Activated CD4-positive, alpha-beta memory T cell treated with anti-CD3 and anti-CD28 coated beads for 36 hours (primary cell): ENCODE measurements at regions of chr5 and their contacts with region 1.

Region 1: GRCh38 chr5:113612060-113612496 is 98.6 kb downstream of the YTHDC2 start:
- DNase-seq: no peak
- H3K4me3 Mint-ChIP-seq: no peak overlapping the region
- H3K27ac Mint-ChIP-seq: no peak overlapping the region
- H3K4me1 Mint-ChIP-seq: peaks cover 4% of the 10 kb centered on the region
- H3K27me3 Mint-ChIP-seq: peaks cover 8% of the 10 kb centered on the region

Region 2: GRCh38 chr5:113663880-113664541 is 51.9 kb after region 1 on chr5:
- CTCF ChIA-PET with region 1: interaction called, 52 read pairs
- POLR2A ChIA-PET with region 1: no interaction called
- intact Hi-C with region 1: loop called (anchors 1 kb)
- DNase-seq: peak; percentile 45
- H3K4me3 Mint-ChIP-seq: no peak overlapping the region
- H3K27ac Mint-ChIP-seq: no peak overlapping the region
- H3K4me1 Mint-ChIP-seq: no peaks in the 10 kb centered on the region
- H3K27me3 Mint-ChIP-seq: peaks cover 26% of the 10 kb centered on the region

Region 3: DNA sequence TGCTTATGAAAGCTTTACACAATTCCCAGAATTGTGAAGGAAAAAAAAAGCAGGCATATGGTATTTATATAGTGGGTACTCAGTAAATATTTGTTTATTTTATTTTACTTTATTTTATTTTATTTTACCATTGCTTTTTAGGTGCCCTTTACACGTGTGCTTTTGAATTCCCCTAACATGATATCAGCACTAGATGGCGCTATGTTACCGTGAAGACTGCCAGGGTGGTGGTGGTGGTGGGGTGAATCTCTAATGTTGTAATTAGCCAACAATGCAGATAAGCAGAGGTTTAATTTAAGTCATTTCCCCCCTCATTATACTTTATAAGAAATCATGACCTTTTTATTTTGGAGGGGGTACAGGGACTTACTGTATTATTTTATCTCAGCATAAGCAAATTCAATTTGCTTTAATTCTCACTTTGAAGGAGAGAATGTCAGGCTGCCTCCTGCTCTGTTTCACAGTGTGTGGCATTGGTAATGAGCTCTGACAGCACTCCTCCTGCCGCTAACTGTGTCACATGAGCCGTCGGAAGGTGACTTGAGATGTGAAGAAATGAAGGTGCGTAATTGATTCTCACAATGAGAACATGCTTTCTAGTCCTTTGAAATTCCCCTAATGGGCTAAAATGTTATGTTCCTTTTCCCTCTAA is 67.0 kb after region 1 on chr5:
- CTCF ChIA-PET with region 1: interaction called, 7 read pairs
- POLR2A ChIA-PET with region 1: no interaction called
- intact Hi-C with region 1: loop called (anchors 5 kb)
- DNase-seq: peak; percentile 24
- H3K4me3 Mint-ChIP-seq: no peak overlapping the region
- H3K27ac Mint-ChIP-seq: no peak overlapping the region
- H3K4me1 Mint-ChIP-seq: no peaks in the 10 kb centered on the region
- H3K27me3 Mint-ChIP-seq: no peaks in the 10 kb centered on the region

Region 4: DNA sequence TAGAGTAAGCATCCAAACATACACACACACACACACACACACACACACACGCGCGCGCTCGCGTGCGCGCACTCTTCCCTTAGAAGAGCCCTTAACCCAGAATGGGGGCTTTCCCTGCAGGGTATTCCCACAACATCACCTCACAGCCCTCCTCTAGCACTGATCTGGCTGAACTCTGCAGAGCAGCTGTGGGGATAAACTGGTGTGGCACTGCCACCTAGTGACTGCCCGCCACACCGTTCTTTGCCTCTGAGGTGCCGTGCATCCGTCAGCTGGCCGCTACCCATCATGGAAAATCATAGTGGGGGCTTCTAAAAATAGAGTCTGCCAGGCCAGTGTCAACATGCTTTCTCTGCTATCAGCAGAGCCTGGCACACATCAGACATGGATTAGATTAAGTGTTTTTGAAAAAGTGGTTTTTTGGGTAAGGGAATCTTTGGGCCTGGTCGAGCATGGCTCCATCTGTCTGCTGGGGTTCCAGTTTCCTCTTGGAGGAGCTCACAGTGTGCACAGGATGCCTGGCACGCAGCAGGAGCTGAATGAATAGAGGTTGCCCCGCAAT is 837.9 kb after region 1 on chr5:
- CTCF ChIA-PET with region 1: interaction called, 32 read pairs
- POLR2A ChIA-PET with region 1: no interaction called
- intact Hi-C with region 1: no loop called
- DNase-seq: peak; percentile 60
- H3K4me3 Mint-ChIP-seq: no peak overlapping the region
- H3K27ac Mint-ChIP-seq: no peak overlapping the region
- H3K4me1 Mint-ChIP-seq: peaks cover 4% of the 10 kb centered on the region
- H3K27me3 Mint-ChIP-seq: peaks cover 4% of the 10 kb centered on the region

Region 5: DNA sequence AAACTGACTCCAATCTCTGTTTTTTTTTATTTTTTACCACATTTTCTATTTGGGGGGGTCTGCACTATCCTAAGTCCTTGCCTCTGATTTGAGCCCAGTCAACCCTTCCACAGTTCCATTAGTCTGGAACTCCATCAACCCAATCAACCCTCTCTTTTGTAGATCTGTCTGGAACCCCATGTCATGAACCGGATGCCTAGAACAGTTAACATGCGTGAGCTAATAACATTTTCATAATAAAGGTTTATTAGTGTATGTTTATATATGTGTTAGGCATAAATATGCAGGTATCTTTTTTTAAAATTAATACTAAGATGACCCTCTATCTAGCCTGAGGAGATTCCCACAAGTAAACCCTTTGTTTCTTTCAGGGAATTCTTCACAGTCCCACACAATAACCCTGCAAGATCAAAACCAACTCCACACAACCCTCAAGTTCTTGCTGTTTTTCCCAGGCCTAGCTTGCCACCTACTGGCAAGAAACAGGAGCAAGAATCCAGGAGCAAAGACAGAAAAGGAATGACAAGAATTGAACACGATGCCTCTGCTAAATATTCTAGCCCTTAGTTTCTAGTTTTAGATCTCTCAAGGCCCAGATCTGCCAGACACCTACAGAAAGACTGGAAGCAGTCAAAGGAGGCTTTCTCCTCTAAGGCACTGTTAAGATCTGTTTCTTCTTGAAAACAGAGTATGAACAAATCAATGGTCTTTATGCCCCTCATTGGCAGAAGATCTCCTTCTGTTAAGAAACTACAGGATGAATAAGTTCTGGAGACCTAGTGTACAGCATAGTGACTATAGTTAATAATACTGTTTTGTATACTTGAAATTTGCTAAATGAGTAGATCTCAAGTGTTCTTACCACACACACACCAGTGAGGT is 1457.2 kb after region 1 on chr5:
- CTCF ChIA-PET with region 1: interaction called, 6 read pairs
- POLR2A ChIA-PET with region 1: no interaction called
- intact Hi-C with region 1: loop called (anchors 2 kb)
- DNase-seq: peak; percentile 20
- H3K4me3 Mint-ChIP-seq: no peak overlapping the region
- H3K27ac Mint-ChIP-seq: peak overlapping the region; percentile 57
- H3K4me1 Mint-ChIP-seq: peaks cover 19% of the 10 kb centered on the region
- H3K27me3 Mint-ChIP-seq: peaks cover 12% of the 10 kb centered on the region

Region 6: GRCh38 chr5:115246361-115246991 is 1634.4 kb after region 1 on chr5:
- CTCF ChIA-PET with region 1: interaction called, 3 read pairs
- POLR2A ChIA-PET with region 1: no interaction called
- intact Hi-C with region 1: loop called (anchors 5 kb)
- DNase-seq: no peak
- H3K4me3 Mint-ChIP-seq: no peak overlapping the region
- H3K27ac Mint-ChIP-seq: no peak overlapping the region
- H3K4me1 Mint-ChIP-seq: peaks cover 16% of the 10 kb centered on the region
- H3K27me3 Mint-ChIP-seq: no peaks in the 10 kb centered on the region